A673 (cell line): ENCODE measurements at regions of chr2 and their contacts with region 1.

Region 1: GRCh38 chr2:290090-290722 is 2.3 kb upstream of the ALKAL2 start:
- DNase-seq: peak; percentile 74
- H3K4me3 ChIP-seq: peak overlapping the region; percentile 35
- H3K27ac ChIP-seq: no peak overlapping the region
- H3K4me1 ChIP-seq: no peaks in the 10 kb centered on the region
- H3K27me3 ChIP-seq: peaks cover 58% of the 10 kb centered on the region
- CTCF ChIP-seq: peak; percentile 87

Region 2: DNA sequence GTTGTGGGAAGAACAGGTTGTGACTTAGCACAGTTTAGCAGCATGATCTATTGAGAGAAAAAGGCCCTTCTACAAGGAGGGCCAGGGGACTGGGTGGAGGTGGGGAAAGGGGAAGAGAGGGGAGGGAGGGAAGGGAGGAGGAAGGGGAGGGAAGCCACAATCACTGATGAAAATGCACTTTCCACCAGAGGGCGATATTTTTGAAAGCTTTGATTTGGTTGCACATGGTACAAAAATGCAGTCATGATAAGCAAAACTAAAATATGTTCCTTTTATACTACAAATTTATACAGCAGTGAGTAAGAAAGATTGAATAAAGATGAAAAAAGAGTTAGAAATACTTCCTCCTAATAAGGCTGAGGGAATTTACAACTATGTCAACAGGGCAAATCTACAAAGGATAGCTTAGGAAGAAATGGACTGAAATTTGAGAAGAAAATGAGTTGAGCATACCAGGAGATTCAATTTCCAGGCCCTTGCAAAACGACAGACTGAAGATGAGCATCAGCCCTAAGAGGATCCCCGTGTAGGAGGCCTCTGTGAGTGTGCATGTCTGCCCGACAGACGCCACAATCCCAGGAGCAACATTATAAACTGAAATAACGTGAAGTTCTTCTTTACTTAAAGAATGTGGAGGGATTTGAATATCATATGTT is 43.6 kb before region 1 on chr2:
- CTCF ChIA-PET with region 1: no interaction called
- POLR2A ChIA-PET with region 1: no interaction called
- intact Hi-C with region 1: loop called (anchors 5 kb)
- DNase-seq: peak; percentile 77
- H3K4me3 ChIP-seq: no peak overlapping the region
- H3K27ac ChIP-seq: no peak overlapping the region
- H3K4me1 ChIP-seq: no peaks in the 10 kb centered on the region
- H3K27me3 ChIP-seq: no peaks in the 10 kb centered on the region
- CTCF ChIP-seq: peak; percentile 71

Region 3: DNA sequence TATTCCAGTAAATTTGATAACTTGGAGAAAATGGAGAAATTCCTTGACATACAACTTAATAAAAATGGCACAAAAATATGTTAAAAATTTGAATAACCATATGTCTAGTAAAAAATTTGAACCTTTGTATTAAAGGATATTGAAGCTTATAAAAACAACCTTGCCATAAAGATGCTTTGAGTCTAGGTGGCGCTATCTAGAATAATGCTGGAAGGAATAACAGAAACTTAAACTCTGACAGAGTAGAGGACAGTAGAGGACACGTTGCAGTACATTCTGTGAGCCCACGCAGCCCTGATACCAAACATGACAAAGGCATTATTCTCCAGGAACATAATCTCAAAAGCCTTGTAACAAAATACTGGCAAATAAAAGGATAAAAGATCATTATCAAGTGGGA is 42.4 kb after region 1 on chr2:
- CTCF ChIA-PET with region 1: no interaction called
- POLR2A ChIA-PET with region 1: no interaction called
- intact Hi-C with region 1: no loop called
- DNase-seq: no peak
- H3K4me3 ChIP-seq: no peak overlapping the region
- H3K27ac ChIP-seq: no peak overlapping the region
- H3K4me1 ChIP-seq: no peaks in the 10 kb centered on the region
- H3K27me3 ChIP-seq: no peaks in the 10 kb centered on the region
- CTCF ChIP-seq: peak; percentile 52

Region 4: GRCh38 chr2:375270-375955 is 85.2 kb after region 1 on chr2:
- CTCF ChIA-PET with region 1: no interaction called
- POLR2A ChIA-PET with region 1: no interaction called
- intact Hi-C with region 1: no loop called
- DNase-seq: no peak
- H3K4me3 ChIP-seq: no peak overlapping the region
- H3K27ac ChIP-seq: no peak overlapping the region
- H3K4me1 ChIP-seq: no peaks in the 10 kb centered on the region
- H3K27me3 ChIP-seq: no peaks in the 10 kb centered on the region
- CTCF ChIP-seq: no peak

Region 5: GRCh38 chr2:1789610-1790009 is 1499.4 kb after region 1 on chr2:
- CTCF ChIA-PET with region 1: interaction called, 10 read pairs
- POLR2A ChIA-PET with region 1: no interaction called
- intact Hi-C with region 1: no loop called
- DNase-seq: no peak
- H3K4me3 ChIP-seq: no peak overlapping the region
- H3K27ac ChIP-seq: no peak overlapping the region
- H3K4me1 ChIP-seq: peaks cover 17% of the 10 kb centered on the region
- H3K27me3 ChIP-seq: no peaks in the 10 kb centered on the region
- CTCF ChIP-seq: peak; percentile 40; the same call in 1 of the 2 replicates